SK-N-SH (cell line): ENCODE measurements at regions of chr22 and their contacts with region 1.

Region 1: DNA sequence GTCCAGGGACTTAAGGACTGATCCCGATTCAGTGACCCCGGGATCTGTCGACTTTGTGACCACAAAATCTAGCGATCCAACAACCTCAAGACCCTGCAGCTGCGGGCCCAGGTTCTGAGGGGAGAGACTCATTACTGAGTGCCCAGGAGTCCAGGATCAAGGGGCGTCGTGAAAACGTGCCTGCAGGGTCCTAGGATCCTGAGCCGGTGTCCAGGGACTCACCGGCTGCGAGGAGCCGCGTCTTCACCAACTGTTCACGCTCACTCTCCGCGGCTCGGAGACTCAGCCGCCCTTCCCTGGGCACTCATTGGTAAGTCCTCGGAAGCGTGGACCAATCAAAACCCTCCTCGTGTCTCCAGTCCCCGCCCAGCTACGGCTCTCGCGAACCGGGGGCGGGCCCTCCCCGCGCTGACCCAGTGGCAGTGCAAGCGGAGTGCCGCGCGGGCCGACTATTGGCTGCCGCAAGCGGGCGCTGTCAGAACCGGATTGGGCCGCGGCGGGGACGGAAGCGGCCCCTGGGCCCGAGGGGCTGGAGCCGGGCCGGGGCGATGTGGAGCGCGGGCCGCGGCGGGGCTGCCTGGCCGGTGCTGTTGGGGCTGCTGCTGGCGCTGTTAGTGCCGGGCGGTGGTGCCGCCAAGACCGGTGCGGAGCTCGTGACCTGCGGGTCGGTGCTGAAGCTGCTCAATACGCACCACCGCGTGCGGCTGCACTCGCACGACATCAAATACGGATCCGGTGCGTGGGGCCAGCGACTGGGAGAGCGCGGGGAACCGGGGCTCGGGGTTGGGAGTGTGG is at the start of gene SDF2L1:
- DNase-seq: peak; percentile 98
- H3K4me3 ChIP-seq: peak within 1 kb of the TSS; percentile 70 to 75
- H3K27ac ChIP-seq: peak within 1 kb of the TSS; percentile 32 to 76; a peak in 3 of 4 replicates
- H3K4me1 ChIP-seq: peaks cover 5 to 21% of the 10 kb centered on the region in 2 experiments; a peak in 2 of 4 replicates
- H3K27me3 ChIP-seq: no peaks in the 10 kb centered on the region
- CTCF ChIP-seq: 0 out of 2 replicates have a peak, but pooled peaks have one; percentile 1
- EP300 ChIP-seq: no peak
- RAD21 ChIP-seq: no peak
- polyA plus RNA-seq, gene SDF2L1: 52.2 and 60.9 TPM in 2 replicates

Region 2: DNA sequence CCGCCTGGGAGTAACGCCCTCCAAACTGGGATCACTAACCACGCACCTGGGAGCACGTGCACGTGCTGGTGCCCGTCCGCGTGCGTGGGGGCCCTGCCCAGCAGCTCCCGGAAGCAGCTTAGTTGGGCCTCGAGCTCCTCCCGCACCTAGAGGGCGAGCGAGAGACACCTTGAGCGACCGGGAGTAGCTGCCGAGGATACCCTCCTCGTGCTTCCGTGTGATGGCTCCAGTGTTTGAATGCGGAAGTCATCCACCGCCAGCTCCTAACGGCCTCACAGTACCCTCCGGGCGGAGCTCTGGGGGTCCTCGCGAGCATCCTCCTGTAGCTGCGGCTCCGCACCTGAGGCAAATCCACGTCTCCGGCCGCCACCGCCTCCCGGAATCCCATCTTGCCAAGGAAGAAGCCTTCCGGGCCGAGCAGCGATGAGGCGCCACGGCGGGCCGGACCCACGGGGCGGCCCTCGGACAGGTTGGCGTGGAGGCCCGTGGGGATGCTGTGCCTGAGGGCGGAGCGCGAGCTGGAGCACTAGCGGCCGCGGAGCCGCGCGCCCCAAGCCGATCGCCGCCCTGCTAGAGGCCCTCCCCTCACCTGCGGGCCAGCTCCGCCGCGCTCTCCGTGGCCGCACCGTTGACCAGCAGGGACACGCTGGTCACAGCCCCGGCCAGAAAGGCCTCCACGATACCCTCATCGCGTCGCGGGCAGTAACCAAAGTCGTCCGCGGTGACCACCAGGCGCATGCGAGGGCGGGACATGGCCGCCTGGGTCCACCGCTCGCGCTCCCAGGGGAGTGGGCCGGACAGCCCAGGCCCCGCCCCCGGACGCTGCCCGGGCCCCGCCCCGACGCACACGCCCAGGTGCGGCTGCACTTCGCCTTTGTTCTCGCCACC is 12.5 kb before region 1 on chr22 and contains the start of gene YDJC:
- CTCF ChIA-PET with region 1: interaction called, 145 read pairs
- POLR2A ChIA-PET with region 1: interaction called, 20 read pairs
- DNase-seq: peak; percentile 99
- H3K4me3 ChIP-seq: peak within 1 kb of the TSS; percentile 90 to 97
- H3K27ac ChIP-seq: peak within 1 kb of the TSS; percentile 74 to 79
- H3K4me1 ChIP-seq: peaks cover 6 to 19% of the 10 kb centered on the region in 2 experiments; a peak in 1 of 4 replicates
- H3K27me3 ChIP-seq: no peaks in the 10 kb centered on the region
- CTCF ChIP-seq: peak; percentile 61
- EP300 ChIP-seq: no peak
- RAD21 ChIP-seq: peak; percentile 49; the same call in 1 of the 2 replicates
- polyA plus RNA-seq, gene YDJC: 37.4 and 39.9 TPM in 2 replicates

Region 3: GRCh38 chr22:21652010-21652546 is 10.1 kb after region 1 on chr22:
- CTCF ChIA-PET with region 1: interaction called, 23 read pairs
- POLR2A ChIA-PET with region 1: interaction called, 9 read pairs
- DNase-seq: peak; percentile 93
- H3K4me3 ChIP-seq: peak overlapping the region; percentile 71 to 95
- H3K27ac ChIP-seq: peak overlapping the region; percentile 63 to 67
- H3K4me1 ChIP-seq: peaks cover 8 to 16% of the 10 kb centered on the region in 2 experiments; a peak in 2 of 4 replicates
- H3K27me3 ChIP-seq: no peaks in the 10 kb centered on the region
- CTCF ChIP-seq: no peak
- EP300 ChIP-seq: no peak
- RAD21 ChIP-seq: no peak

Region 4: DNA sequence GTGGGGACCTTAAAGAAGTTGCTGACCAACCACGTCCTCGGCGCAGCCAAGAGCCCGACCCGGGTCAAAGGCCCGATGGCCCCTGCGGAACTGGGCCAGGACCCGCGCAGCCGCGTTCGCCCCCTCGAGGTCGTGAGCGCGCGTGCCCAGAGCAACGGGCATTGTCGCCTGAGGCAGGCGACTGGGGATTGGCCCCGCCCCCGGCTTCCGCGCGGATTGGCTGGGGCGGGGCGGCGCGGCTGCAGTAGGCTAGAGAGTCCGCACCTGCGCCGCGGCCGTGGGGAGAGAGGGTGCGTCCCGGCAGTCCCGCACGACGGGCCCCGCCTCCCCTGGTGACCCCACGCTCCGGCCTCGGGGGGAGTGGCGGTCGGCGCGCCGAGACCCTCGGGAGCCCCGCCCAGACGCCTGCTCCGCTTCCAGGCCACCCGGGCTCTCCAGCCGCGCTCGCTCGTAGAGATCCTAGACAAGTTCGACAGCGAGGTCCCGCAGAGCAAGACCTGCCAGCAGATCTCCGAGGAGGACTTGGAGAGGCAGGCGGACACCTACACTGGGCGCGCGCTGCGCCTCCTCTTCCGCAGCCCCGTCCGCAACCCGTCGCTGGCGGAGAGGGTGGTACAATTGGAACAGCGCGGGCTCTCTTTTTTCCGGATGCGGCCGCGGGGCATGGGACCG is 15.5 kb after region 1 on chr22:
- CTCF ChIA-PET with region 1: interaction called, 23 read pairs
- POLR2A ChIA-PET with region 1: interaction called, 9 read pairs
- DNase-seq: peak; percentile 95
- H3K4me3 ChIP-seq: peak overlapping the region; percentile 58 to 61
- H3K27ac ChIP-seq: peak overlapping the region in 1 of 2 experiments; percentile 64; a peak in 1 of 4 replicates
- H3K4me1 ChIP-seq: peaks cover 0 to 12% of the 10 kb centered on the region in 2 experiments; a peak in 1 of 4 replicates
- H3K27me3 ChIP-seq: no peaks in the 10 kb centered on the region
- CTCF ChIP-seq: 0 out of 2 replicates have a peak, but pooled peaks have one; percentile 23
- EP300 ChIP-seq: no peak
- RAD21 ChIP-seq: no peak

Region 5: GRCh38 chr22:21666786-21667185 is 24.8 kb after region 1 on chr22:
- CTCF ChIA-PET with region 1: interaction called, 4 read pairs
- POLR2A ChIA-PET with region 1: interaction called, 12 read pairs
- DNase-seq: no peak
- H3K4me3 ChIP-seq: peak overlapping the region; percentile 72 to 98
- H3K27ac ChIP-seq: peak overlapping the region in 1 of 2 experiments; percentile 86; a peak in 1 of 4 replicates
- H3K4me1 ChIP-seq: peaks cover 0 to 2% of the 10 kb centered on the region in 2 experiments; a peak in 1 of 4 replicates
- H3K27me3 ChIP-seq: no peaks in the 10 kb centered on the region
- CTCF ChIP-seq: no peak
- EP300 ChIP-seq: no peak
- RAD21 ChIP-seq: no peak